MCF 10A (cell line): ENCODE measurements at regions of chr9 and their contacts with region 1.

Region 1: DNA sequence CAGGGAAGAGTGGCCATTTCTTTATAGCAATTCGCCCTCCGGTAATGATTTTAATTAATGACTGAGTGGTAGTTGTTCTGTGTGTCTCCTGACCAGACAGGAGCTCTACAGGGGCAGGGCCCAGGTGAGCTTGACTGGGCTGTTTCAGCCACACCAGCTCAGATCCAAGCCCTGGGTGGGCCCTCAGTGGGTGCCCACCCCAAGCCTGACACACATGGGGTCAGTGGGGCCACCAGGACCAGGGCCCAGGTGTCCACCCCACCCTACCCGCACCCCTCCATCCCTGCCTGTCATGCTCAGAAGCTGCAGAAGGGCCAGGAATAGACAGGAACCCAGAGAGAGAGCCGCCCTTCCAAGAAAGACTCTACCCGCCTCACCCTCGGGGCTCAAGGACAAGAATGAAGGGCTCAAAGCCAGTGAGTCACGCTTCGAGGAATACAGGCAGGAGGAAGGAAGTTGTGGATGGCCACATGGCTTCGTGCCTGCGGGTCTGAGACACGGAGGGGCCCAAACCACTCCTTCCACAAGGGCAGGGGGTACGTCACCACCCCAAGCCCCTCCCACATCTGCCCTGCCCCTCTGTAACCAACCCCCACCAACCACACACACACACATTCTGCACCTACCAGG is 56.2 kb upstream of the STXBP1 start:
- DNase-seq: peak; percentile 98
- H3K4me3 Mint-ChIP-seq: peak overlapping the region; percentile 50
- H3K27ac Mint-ChIP-seq: peak overlapping the region; percentile 59
- H3K4me1 Mint-ChIP-seq: peaks cover 43% of the 10 kb centered on the region
- H3K27me3 Mint-ChIP-seq: no peaks in the 10 kb centered on the region
- CTCF ChIP-seq: no peak

Region 2: GRCh38 chr9:127444921-127445850 is 110.7 kb before region 1 on chr9:
- CTCF ChIA-PET with region 1: no interaction called
- POLR2A ChIA-PET with region 1: no interaction called
- intact Hi-C with region 1: no loop called
- DNase-seq: peak; percentile 67
- H3K4me3 Mint-ChIP-seq: no peak overlapping the region
- H3K27ac Mint-ChIP-seq: peak overlapping the region; percentile 66
- H3K4me1 Mint-ChIP-seq: peaks cover 48% of the 10 kb centered on the region
- H3K27me3 Mint-ChIP-seq: no peaks in the 10 kb centered on the region
- CTCF ChIP-seq: no peak

Region 3: DNA sequence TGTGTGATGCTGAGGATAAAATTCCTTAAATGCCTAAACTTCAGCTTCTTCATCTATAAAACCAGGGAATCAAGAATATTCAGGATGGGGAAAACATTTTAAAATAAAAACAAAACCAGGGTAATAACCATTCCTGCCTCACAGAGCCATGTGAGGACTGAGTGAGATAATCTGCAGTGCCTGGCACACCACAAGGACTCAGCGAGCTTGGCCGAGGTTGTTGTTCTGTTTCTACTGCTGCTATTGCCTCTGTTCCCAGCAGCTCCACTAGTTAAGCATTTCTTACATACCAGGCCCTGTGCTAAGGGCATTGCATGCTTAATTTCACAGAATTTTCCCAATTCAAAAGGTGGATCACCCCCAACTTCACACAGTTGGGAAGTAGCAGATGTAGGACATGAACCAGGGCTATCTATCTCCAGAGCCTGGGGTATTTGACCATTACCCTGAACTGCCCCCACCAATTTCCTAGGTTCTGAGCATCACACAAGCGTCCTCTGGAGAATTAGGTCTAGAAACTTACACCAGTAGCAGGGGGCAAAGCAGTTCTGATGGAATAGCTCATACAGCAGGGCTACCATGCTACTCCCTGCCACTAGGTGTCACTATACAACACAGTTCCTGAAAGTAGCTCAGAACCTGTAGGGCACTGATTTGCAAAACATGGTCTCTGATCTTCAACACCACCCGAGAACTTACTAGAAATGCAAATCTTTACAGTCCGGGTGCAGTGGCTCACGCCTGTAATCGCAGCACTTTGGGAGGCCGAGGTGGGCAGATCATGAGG is 30.3 kb before region 1 on chr9:
- CTCF ChIA-PET with region 1: interaction called, 8 read pairs
- POLR2A ChIA-PET with region 1: interaction called, 3 read pairs
- intact Hi-C with region 1: loop called (anchors 2 kb)
- DNase-seq: no peak
- H3K4me3 Mint-ChIP-seq: no peak overlapping the region
- H3K27ac Mint-ChIP-seq: peak overlapping the region; percentile 31
- H3K4me1 Mint-ChIP-seq: peaks cover 24% of the 10 kb centered on the region
- H3K27me3 Mint-ChIP-seq: no peaks in the 10 kb centered on the region
- CTCF ChIP-seq: peak; percentile 44

Region 4: GRCh38 chr9:127568971-127569885 is 13.3 kb after region 1 on chr9:
- CTCF ChIA-PET with region 1: interaction called, 4 read pairs
- POLR2A ChIA-PET with region 1: interaction called, 24 read pairs
- intact Hi-C with region 1: no loop called
- DNase-seq: peak; percentile 86
- H3K4me3 Mint-ChIP-seq: peak overlapping the region; percentile 98
- H3K27ac Mint-ChIP-seq: peak overlapping the region; percentile 55
- H3K4me1 Mint-ChIP-seq: peaks cover 32% of the 10 kb centered on the region
- H3K27me3 Mint-ChIP-seq: no peaks in the 10 kb centered on the region
- CTCF ChIP-seq: no peak

Region 5: GRCh38 chr9:127578955-127579853 is 23.3 kb after region 1 on chr9:
- CTCF ChIA-PET with region 1: interaction called, 12 read pairs
- POLR2A ChIA-PET with region 1: interaction called, 32 read pairs
- intact Hi-C with region 1: no loop called
- DNase-seq: peak; percentile 98
- H3K4me3 Mint-ChIP-seq: peak overlapping the region; percentile 71
- H3K27ac Mint-ChIP-seq: peak overlapping the region; percentile 76
- H3K4me1 Mint-ChIP-seq: peaks cover 39% of the 10 kb centered on the region
- H3K27me3 Mint-ChIP-seq: no peaks in the 10 kb centered on the region
- CTCF ChIP-seq: no peak